Calu3 (cell line): ENCODE measurements at regions of chr11 and their contacts with region 1.

Region 1: DNA sequence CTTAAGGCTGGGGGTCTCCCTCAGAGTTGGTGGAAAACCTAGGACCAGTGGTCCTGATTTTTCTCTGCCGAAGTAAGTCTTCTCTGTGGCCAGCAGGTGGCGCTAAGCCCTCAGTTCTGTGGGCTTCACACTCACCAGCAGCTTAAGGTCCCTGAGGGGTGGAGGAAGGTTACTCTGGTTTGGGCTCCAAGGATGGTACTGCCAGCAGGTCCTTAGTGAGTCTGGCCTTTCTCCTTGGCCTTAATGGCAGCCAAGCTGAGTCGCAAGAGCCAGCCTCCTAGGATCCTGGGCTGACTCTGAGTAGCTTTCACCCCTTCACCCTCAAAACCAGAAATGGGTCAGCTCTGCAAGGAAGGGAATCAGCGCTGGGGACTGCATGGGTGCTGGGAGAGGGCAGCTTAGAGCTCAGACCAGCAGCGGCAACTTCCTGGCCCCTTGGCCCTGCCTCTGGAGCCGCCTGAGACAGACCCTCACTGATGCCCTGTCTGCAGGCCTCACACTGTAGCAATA is 4.4 kb downstream of the KCNJ11 start:
- DNase-seq: peak; percentile 82
- H3K4me3 Mint-ChIP-seq: no peak overlapping the region
- H3K27ac Mint-ChIP-seq: no peak overlapping the region
- H3K4me1 Mint-ChIP-seq: no peaks in the 10 kb centered on the region
- H3K27me3 Mint-ChIP-seq: no peaks in the 10 kb centered on the region
- CTCF ChIP-seq: peak; percentile 85

Region 2: DNA sequence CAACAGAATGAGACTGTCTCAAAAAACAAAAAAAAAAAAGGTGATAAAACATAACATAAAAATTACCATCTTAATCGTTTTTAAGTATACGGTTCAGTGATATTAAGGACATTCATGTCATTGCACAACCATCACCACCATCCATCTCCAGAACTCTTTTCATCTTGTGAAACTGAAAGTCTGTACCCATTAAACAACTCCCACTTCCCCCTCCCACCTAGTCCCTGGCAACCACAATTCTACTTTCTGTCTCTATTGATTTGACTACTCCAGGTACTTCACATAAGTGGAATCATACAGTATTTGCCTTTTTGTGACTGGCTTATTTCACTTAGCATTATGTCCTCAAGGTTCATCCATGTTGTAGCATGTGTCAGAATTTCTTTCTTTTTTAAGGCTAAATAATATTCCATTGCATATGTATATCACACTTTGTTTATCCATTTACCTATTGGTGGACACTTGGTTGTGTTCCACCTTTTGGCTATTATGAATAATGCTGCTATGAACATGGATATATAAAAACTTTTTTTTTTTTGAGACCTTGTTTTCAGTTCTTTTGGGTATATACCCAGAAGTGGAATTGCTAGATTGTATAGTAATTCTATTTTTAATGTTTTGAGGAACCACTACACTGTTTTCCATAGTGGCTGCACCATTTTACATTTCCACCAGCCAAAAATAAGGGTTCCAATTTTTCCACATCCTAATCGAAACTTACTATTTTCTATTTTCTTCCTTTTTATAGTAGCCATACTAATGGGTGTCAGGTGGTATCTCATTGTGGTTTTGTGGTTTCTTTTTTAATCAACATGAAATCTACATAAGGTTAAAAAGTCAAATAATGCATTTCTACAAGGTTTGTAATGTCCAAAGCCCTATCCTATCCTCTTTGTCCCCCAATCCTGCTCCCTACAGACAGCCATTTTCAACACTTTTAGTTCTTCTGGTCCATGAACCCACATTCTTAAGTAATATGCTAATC is 152.9 kb before region 1 on chr11:
- CTCF ChIA-PET with region 1: no interaction called
- intact Hi-C with region 1: loop called (anchors 2 kb)
- DNase-seq: no peak
- H3K4me3 Mint-ChIP-seq: no peak overlapping the region
- H3K27ac Mint-ChIP-seq: no peak overlapping the region
- H3K4me1 Mint-ChIP-seq: no peaks in the 10 kb centered on the region
- H3K27me3 Mint-ChIP-seq: no peaks in the 10 kb centered on the region
- CTCF ChIP-seq: no peak

Region 3: DNA sequence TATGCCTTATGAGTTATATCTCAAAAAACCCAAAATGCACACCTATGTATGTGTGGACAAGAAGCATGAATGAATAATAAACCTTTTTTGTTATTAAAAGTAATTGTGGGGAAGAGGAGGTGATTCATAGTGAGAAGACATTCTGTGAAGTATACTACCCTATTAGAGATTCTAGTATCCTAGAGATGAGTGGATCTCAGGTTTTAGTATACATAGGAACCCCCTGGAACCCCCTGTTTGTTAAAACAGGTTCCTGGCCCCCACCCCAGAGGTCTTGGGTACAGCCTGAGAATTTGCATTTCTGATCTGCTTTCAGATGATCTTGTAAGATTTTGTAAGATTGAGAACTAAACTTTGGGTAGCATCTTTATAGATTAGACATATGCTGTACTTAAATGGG is 90.0 kb before region 1 on chr11:
- CTCF ChIA-PET with region 1: no interaction called
- intact Hi-C with region 1: no loop called
- DNase-seq: no peak
- H3K4me3 Mint-ChIP-seq: no peak overlapping the region
- H3K27ac Mint-ChIP-seq: no peak overlapping the region
- H3K4me1 Mint-ChIP-seq: no peaks in the 10 kb centered on the region
- H3K27me3 Mint-ChIP-seq: no peaks in the 10 kb centered on the region
- CTCF ChIP-seq: no peak

Region 4: DNA sequence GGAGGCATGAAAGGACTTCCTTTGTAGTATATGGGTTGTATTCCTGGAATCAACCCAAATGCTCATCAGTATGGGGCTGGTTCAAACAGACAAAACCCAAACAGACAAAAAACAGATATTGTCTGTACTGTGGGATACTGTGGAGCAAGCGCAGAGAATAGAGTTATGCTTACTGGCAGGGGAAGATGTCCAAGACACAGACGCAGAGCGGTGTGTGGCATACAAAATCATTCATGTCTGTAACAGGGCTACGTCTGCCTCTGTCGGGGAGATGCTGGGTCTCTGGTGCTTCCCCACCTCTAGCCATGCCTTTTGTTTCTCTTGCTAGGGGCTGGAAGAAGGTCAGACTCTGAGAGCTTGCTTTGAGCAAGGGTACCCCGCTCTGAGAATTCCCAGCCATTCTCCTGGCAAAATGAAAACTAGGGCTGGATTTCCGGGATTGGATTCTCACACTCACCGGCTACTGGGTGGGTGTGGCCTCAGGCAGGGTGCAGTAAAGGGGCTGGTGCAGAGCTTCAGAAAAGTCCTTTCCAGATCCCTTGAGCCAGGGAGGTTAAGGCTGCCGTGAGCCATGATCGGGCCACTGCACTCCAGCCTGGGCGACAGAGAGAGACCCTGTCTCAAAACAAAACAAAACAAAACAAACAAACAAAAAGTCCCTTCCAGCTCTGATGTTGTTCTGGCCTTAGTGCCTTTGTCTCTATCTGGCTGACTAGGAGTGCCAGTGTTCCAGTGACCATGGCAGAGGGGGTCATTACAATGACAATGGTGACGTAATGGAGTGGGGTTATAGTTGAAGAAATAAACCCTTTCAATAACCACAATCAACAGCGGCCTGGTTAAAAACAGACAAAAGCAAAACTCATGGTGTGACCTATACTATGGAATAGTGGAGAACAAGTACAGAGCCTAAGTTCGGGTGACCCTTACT is 95.5 kb after region 1 on chr11:
- CTCF ChIA-PET with region 1: interaction called, 4 read pairs
- intact Hi-C with region 1: loop called (anchors 10 kb)
- DNase-seq: peak; percentile 61
- H3K4me3 Mint-ChIP-seq: peak overlapping the region; percentile 4
- H3K27ac Mint-ChIP-seq: no peak overlapping the region
- H3K4me1 Mint-ChIP-seq: no peaks in the 10 kb centered on the region
- H3K27me3 Mint-ChIP-seq: peaks cover 63% of the 10 kb centered on the region
- CTCF ChIP-seq: no peak

Region 5: DNA sequence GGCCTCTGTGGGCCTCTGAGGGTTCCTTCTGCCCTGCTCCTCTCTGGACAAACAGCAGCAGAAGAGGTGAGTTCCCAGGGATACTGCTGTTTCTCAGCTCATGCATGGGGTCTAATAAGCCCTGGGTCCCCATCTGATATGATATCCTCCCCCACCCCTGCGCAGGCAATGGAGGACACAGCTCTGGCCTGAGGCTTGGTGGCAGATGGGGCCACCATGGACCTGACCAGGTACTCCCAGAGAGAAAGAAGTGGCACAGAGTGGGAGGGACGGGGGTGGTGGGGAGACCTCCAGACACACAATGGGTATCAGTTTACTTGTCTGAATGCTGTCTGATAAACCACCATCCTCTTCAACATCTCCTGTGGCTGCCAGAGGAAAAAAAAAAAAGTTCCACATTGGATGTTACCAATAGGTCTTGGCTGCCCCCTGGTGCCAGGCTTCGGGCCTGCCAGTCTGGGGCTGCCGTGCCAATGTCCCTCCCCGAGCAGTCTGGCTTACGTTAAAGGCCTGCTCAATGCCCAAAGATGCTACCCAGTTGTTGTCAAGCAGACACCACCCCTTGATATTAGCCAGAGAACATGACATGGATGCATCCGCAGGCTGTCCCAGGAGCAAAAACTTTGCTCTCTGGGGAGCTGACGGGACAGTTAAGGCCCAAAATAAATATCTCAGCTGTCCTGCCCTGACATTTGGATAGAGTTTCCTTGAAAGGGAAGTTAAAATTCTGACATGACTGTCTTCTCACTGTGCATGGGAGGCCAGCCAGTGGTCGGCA is 120.5 kb after region 1 on chr11:
- CTCF ChIA-PET with region 1: interaction called, 21 read pairs
- intact Hi-C with region 1: loop called (anchors 1 kb)
- DNase-seq: peak; percentile 90
- H3K4me3 Mint-ChIP-seq: no peak overlapping the region
- H3K27ac Mint-ChIP-seq: no peak overlapping the region
- H3K4me1 Mint-ChIP-seq: peaks cover 13% of the 10 kb centered on the region
- H3K27me3 Mint-ChIP-seq: no peaks in the 10 kb centered on the region
- CTCF ChIP-seq: peak; percentile 85

Region 6: DNA sequence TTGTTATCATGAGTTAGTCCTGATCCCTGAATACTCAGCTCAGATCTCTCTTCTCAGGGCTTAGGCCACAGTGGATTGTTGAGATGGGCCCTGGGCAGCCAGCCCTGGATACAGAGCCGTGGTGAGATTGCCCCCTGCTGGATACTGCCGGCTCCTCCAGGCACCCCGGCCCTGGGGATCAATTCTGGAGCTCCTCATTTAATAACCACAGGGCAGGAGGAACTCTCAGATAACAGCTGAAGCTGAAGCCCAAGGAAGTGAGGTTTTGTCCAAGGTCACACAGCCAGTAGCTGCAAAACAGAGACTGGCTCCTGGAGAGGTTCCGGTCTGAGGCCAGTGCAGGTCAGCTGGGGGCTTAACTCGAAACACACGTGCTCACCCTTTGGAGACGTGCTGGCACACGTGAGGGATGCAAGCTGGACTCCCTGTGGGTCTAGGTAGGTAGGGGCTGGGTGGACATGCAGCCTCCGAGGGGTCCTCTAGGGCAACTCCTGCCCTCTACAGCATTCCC is 144.2 kb after region 1 on chr11:
- CTCF ChIA-PET with region 1: interaction called, 27 read pairs
- intact Hi-C with region 1: no loop called
- DNase-seq: peak; percentile 76
- H3K4me3 Mint-ChIP-seq: no peak overlapping the region
- H3K27ac Mint-ChIP-seq: no peak overlapping the region
- H3K4me1 Mint-ChIP-seq: no peaks in the 10 kb centered on the region
- H3K27me3 Mint-ChIP-seq: no peaks in the 10 kb centered on the region
- CTCF ChIP-seq: peak; percentile 42